Activated B cell treated with CpG ODN at 0.5 μM for 24 hours (primary cell): ENCODE measurements at regions of chr2 and their contacts with region 1.

Region 1: GRCh38 chr2:32627814-32628579 is at the start of gene TTC27:
- DNase-seq: peak; percentile 93
- ATAC-seq: peak; percentile 100
- H3K4me3 Mint-ChIP-seq: peak within 1 kb of the TSS; percentile 97
- H3K27ac Mint-ChIP-seq: peak within 1 kb of the TSS; percentile 93
- H3K4me1 Mint-ChIP-seq: peaks cover 27% of the 10 kb centered on the region
- H3K27me3 Mint-ChIP-seq: no peaks in the 10 kb centered on the region
- CTCF ChIP-seq: no peak
- total RNA-seq, gene TTC27: 34.8 and 36.3 TPM in 2 replicates

Region 2: GRCh38 chr2:32277674-32278482 is 350.1 kb before region 1 on chr2 and contains the start of gene YIPF4:
- CTCF ChIA-PET with region 1: no interaction called
- POLR2A ChIA-PET with region 1: no interaction called
- intact Hi-C with region 1: loop called (anchors 1 kb)
- DNase-seq: peak; percentile 92
- ATAC-seq: peak; percentile 98
- H3K4me3 Mint-ChIP-seq: peak within 1 kb of the TSS; percentile 90
- H3K27ac Mint-ChIP-seq: peak within 1 kb of the TSS; percentile 94
- H3K4me1 Mint-ChIP-seq: peaks cover 23% of the 10 kb centered on the region
- H3K27me3 Mint-ChIP-seq: peaks cover 9% of the 10 kb centered on the region
- CTCF ChIP-seq: no peak
- total RNA-seq, gene YIPF4: 25.6 and 27.2 TPM in 2 replicates

Region 3: DNA sequence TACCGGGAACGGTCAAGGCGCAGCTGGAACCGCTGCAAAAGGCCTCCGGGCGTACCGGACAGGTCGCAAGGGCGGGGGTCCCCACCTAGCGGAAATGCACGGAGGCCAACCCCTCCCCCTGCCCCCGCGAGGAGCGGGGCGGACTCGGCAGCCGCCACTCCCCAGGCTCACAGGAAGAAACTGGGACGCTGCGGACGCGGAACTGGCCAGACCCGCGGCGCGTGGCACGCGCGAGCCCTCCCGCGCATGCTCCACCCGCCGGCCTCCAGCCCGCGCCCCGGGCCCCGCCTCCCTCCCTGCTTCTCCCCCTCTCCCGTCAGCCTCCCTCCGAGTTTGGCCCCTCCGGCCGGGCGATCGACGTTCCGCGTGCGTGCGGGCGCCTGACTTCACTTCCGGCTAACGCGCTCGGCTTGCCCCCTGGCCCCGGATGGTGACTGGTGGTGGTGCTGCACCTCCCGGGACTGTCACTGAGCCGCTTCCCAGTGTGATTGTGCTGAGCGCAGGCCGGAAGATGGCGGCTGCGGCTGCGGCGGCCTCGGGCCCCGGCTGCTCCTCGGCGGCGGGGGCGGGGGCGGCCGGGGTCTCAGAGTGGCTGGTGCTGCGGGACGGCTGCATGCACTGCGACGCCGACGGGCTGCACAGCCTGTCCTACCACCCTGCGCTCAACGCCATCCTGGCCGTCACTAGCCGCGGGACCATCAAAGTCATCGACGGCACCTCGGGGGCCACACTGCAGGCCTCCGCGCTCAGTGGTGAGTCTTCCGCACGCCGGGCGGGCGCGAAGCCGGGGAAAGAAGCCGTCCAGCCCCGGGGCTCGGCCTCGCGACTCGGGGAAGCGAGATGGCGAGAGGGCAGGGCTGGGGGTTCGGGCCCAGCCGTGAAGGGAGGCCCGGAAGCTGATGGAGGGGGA is 271.0 kb before region 1 on chr2 and contains the start of gene BIRC6:
- CTCF ChIA-PET with region 1: no interaction called
- POLR2A ChIA-PET with region 1: no interaction called
- intact Hi-C with region 1: loop called (anchors 2 kb)
- DNase-seq: peak; percentile 96
- ATAC-seq: peak; percentile 87
- H3K4me3 Mint-ChIP-seq: peak within 1 kb of the TSS; percentile 93
- H3K27ac Mint-ChIP-seq: peak within 1 kb of the TSS; percentile 90
- H3K4me1 Mint-ChIP-seq: peaks cover 41% of the 10 kb centered on the region
- H3K27me3 Mint-ChIP-seq: no peaks in the 10 kb centered on the region
- CTCF ChIP-seq: no peak
- total RNA-seq, gene BIRC6: 155 and 180 TPM in 2 replicates

Region 4: GRCh38 chr2:32611366-32611765 is 16.6 kb before region 1 on chr2:
- CTCF ChIA-PET with region 1: no interaction called
- POLR2A ChIA-PET with region 1: interaction called, 16 read pairs
- intact Hi-C with region 1: no loop called
- DNase-seq: no peak
- ATAC-seq: no peak
- H3K4me3 Mint-ChIP-seq: no peak overlapping the region
- H3K27ac Mint-ChIP-seq: no peak overlapping the region
- H3K4me1 Mint-ChIP-seq: no peaks in the 10 kb centered on the region
- H3K27me3 Mint-ChIP-seq: no peaks in the 10 kb centered on the region
- CTCF ChIP-seq: no peak

Region 5: DNA sequence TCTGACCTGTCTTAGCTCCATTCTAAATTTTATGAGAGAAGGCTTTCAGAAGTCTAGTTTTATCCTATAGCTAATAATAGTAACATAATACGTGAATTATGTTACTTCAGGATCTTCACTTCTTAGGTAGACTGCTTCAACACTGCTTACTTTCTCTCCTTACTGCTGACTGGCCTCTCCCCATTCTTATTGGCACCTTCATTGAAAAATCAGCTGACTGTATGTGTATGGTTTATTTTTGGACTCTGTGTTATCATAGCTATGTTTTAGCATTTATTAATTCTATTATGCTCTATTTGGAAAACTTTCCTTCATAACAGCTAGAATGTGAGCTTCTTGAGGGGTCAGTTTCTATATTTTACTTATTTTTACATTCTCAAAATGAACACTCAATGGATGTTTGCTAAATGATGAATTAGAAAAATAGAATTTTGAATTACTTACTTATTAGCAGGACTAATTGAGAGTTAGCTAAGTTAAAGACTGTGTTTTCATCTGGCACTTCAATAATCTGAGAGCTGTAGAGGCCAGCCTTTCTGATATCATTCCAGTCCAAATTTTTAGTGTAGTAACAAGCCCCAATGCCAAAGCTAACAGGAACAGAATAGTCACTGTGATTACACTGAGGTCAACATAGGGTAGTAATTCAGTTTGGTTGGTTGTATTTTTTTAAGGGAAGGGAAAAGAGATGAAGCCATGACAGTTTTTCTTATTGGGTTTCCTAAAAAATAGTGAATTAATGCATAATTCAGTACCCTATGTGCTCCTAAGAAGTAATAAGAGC is 92.1 kb after region 1 on chr2:
- CTCF ChIA-PET with region 1: no interaction called
- POLR2A ChIA-PET with region 1: no interaction called
- intact Hi-C with region 1: no loop called
- DNase-seq: no peak
- ATAC-seq: no peak
- H3K4me3 Mint-ChIP-seq: no peak overlapping the region
- H3K27ac Mint-ChIP-seq: no peak overlapping the region
- H3K4me1 Mint-ChIP-seq: peaks cover 6% of the 10 kb centered on the region
- H3K27me3 Mint-ChIP-seq: no peaks in the 10 kb centered on the region
- CTCF ChIP-seq: no peak